ENCODE measurements at regions of chr22 and their contacts with region 1.

Region 1: DNA sequence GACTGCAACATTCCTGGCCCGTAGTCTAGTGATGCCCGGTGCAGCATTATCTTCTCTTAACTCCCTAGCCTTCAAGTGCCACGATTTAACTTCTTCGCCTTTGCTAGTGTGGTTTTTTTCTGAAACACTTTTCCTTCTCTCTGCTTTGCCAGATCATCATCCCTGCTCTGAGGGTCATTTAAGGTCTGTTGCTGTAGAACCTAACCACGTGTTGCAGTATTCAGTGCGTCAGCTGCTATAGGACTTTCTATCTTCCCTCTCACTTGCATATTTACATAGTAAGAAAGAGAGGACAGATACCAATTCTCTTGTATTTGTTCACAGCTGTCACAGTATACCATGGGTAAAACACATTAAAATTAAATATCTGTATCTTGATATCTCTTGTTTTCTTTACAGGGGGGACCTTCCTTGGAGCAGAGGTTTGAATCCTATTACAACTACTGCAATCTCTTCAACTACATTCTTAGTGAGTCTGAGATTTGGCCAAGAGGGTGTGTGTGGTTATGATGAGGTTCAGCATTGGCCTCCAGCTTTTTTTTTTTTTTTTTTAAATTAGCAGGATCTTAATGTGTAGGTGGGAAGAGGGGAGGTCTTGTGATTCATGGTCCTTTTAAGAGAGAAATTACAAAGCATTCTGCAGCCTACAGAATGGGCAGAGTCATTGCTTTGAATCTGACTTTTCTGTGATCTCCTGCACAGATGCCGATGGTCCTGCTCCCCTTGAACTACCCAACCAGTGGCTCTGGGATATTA is 13.5 kb downstream of the EIF3L start:
- DNase-seq: no peak
- ATAC-seq: peak; percentile 39
- H3K4me3 Mint-ChIP-seq: no peak overlapping the region
- H3K27ac Mint-ChIP-seq: peak overlapping the region; percentile 26
- H3K4me1 Mint-ChIP-seq: peaks cover 9% of the 10 kb centered on the region
- H3K27me3 Mint-ChIP-seq: no peaks in the 10 kb centered on the region

Region 2: GRCh38 chr22:37462983-37463382 is 399.8 kb before region 1 on chr22:
- CTCF ChIA-PET with region 1: no interaction called
- POLR2A ChIA-PET with region 1: no interaction called
- intact Hi-C with region 1: no loop called
- DNase-seq: peak; percentile 34
- ATAC-seq: no peak
- H3K4me3 Mint-ChIP-seq: no peak overlapping the region
- H3K27ac Mint-ChIP-seq: no peak overlapping the region
- H3K4me1 Mint-ChIP-seq: peaks cover 4% of the 10 kb centered on the region
- H3K27me3 Mint-ChIP-seq: no peaks in the 10 kb centered on the region

Region 3: GRCh38 chr22:37623075-37624016 is 239.4 kb before region 1 on chr22:
- CTCF ChIA-PET with region 1: interaction called, 3 read pairs
- POLR2A ChIA-PET with region 1: no interaction called
- intact Hi-C with region 1: loop called in 1 of 2 experiments (anchors 5 kb)
- DNase-seq: peak; percentile 88
- ATAC-seq: peak; percentile 83
- H3K4me3 Mint-ChIP-seq: no peak overlapping the region
- H3K27ac Mint-ChIP-seq: peak overlapping the region; percentile 89
- H3K4me1 Mint-ChIP-seq: peaks cover 43% of the 10 kb centered on the region
- H3K27me3 Mint-ChIP-seq: no peaks in the 10 kb centered on the region

Region 4: GRCh38 chr22:37843741-37843990 is 19.1 kb before region 1 on chr22:
- CTCF ChIA-PET with region 1: interaction called, 18 read pairs
- POLR2A ChIA-PET with region 1: interaction called, 4 read pairs
- intact Hi-C with region 1: no loop called
- DNase-seq: no peak
- ATAC-seq: peak; percentile 30
- H3K4me3 Mint-ChIP-seq: peak overlapping the region; percentile 83
- H3K27ac Mint-ChIP-seq: peak overlapping the region; percentile 88
- H3K4me1 Mint-ChIP-seq: peaks cover 26% of the 10 kb centered on the region
- H3K27me3 Mint-ChIP-seq: no peaks in the 10 kb centered on the region

Region 5: DNA sequence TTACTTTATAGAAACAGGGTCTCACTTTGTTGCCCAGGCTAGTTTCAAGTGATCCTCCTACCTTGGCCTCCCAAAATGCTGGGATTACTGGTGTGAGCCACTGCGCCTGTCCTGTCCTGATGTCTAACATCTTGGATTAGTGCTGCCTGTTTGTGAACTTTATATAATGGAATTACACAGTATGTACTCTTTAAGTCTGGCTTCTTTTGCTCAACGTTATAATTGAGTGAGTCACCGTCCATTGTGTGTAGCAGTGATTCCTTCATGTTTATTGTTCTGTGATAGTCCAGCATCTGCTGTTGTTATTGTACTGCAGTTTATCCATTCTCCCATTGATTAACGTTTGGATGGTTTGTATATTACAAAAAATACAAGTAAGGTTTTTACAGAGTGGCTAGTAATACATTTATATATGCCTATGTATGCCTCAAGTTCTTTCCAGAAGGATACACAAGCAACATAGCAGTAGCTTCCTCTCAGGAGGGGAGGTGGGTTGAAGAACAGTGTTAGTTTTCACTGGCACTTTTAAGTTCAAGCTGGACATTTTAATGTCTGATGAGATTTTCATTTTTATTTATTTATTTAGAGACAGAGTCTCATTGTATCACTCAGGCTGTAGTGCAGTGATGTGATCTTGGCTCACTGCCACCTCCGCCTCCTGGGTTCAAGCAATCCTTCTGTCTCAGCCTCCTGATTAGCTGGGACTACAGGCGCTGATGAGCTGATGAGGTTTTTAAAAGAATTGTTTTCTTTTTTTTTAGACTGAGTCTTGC is 18.1 kb after region 1 on chr22:
- CTCF ChIA-PET with region 1: interaction called, 12 read pairs
- POLR2A ChIA-PET with region 1: interaction called, 4 read pairs
- intact Hi-C with region 1: no loop called
- DNase-seq: no peak
- ATAC-seq: no peak
- H3K4me3 Mint-ChIP-seq: no peak overlapping the region
- H3K27ac Mint-ChIP-seq: no peak overlapping the region
- H3K4me1 Mint-ChIP-seq: peaks cover 4% of the 10 kb centered on the region
- H3K27me3 Mint-ChIP-seq: no peaks in the 10 kb centered on the region

Region 6: GRCh38 chr22:37896181-37896592 is 33.4 kb after region 1 on chr22:
- CTCF ChIA-PET with region 1: interaction called, 19 read pairs
- POLR2A ChIA-PET with region 1: interaction called, 3 read pairs
- intact Hi-C with region 1: no loop called
- DNase-seq: peak; percentile 65
- ATAC-seq: peak; percentile 97
- H3K4me3 Mint-ChIP-seq: no peak overlapping the region
- H3K27ac Mint-ChIP-seq: peak overlapping the region; percentile 89
- H3K4me1 Mint-ChIP-seq: peaks cover 26% of the 10 kb centered on the region
- H3K27me3 Mint-ChIP-seq: no peaks in the 10 kb centered on the region

Region 7: DNA sequence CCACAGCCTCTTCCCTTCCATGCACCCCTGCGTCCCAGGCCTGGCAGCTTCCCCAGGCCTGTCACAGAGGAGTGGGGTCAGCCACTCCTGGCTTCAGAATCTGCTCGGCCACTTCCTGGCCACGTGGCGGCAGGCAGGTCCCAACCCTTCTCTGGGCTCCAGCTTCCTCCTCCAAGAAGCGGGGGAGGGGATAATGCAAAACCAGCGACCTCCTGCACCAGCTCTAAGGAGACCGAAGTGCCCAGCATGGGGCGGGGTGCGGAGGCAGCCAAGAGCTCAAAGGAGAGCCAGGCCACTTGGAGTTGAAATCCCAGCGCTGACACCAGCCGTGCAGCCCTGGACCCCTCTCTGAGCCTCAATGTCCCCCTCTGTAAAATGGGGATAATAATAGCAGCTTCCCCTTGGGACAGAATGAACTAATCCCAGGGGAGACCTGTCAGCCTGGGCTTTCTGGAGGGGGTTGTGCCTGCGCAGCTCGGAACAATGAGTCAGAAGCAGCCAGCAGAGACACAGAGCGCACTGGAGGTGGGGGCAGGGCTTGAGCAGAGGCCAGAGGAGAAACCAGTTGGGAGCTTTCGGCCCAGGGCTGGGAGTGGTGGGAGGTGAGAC is 171.6 kb after region 1 on chr22:
- CTCF ChIA-PET with region 1: no interaction called
- POLR2A ChIA-PET with region 1: no interaction called
- intact Hi-C with region 1: no loop called
- DNase-seq: no peak
- ATAC-seq: no peak
- H3K4me3 Mint-ChIP-seq: no peak overlapping the region
- H3K27ac Mint-ChIP-seq: no peak overlapping the region
- H3K4me1 Mint-ChIP-seq: no peaks in the 10 kb centered on the region
- H3K27me3 Mint-ChIP-seq: no peaks in the 10 kb centered on the region